ENCODE measurements at regions of chr4 and their contacts with region 1.

Region 1: GRCh38 chr4:48269861-48270522 is 354 bp upstream of the TEC start:
- DNase-seq: peak; percentile 73 to 91 (median 80)
- ATAC-seq: peak; percentile 87
- H3K4me3 ChIP-seq: peak overlapping the region; percentile 87
- H3K4me3 Mint-ChIP-seq: peak overlapping the region; percentile 98
- H3K27ac ChIP-seq: peak overlapping the region in 1 of 2 donors; percentile 55
- H3K27ac Mint-ChIP-seq: peak overlapping the region; percentile 79
- H3K4me1 ChIP-seq: peaks cover 19% of the 10 kb centered on the region
- H3K4me1 Mint-ChIP-seq: peaks cover 29% of the 10 kb centered on the region
- H3K27me3 ChIP-seq: no peaks in the 10 kb centered on the region
- H3K27me3 Mint-ChIP-seq: no peaks in the 10 kb centered on the region
- CTCF ChIP-seq: peak; percentile 46

Region 2: GRCh38 chr4:48127682-48128394 is 142.2 kb before region 1 on chr4:
- CTCF ChIA-PET with region 1: interaction called, 4 read pairs
- POLR2A ChIA-PET with region 1: no interaction called
- intact Hi-C with region 1: loop called in 1 of 2 experiments (anchors 10 kb)
- DNase-seq: peak; percentile 46 to 83 (median 66)
- ATAC-seq: peak; percentile 78
- H3K4me3 ChIP-seq: peak overlapping the region; percentile 33
- H3K4me3 Mint-ChIP-seq: peak overlapping the region; percentile 86
- H3K27ac ChIP-seq: peak overlapping the region; percentile 70 to 80
- H3K27ac Mint-ChIP-seq: peak overlapping the region; percentile 88
- H3K4me1 ChIP-seq: peaks cover 78% of the 10 kb centered on the region
- H3K4me1 Mint-ChIP-seq: peaks cover 87% of the 10 kb centered on the region
- H3K27me3 ChIP-seq: no peaks in the 10 kb centered on the region
- H3K27me3 Mint-ChIP-seq: no peaks in the 10 kb centered on the region
- CTCF ChIP-seq: peak; percentile 61

Region 3: DNA sequence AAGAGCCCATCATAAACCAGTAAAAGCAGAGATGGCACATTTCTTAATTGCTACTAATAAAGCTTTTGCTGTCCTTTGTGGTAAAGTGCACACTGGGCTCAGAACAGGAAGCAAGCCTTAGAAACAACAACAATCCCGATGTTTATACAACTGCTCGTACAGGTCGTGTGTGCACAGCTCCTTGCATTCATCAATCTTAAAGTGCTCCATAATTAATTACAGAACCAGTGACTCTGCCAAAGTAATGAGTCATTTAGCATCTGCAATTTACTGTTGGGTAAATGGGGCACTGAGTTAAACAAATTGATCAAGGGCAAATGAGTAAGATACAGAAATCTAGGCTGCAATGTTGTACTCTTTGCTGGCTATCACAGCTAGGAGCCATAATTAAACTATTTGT is 74.6 kb before region 1 on chr4:
- CTCF ChIA-PET with region 1: no interaction called
- POLR2A ChIA-PET with region 1: no interaction called
- intact Hi-C with region 1: no loop called
- DNase-seq: no peak
- ATAC-seq: no peak
- H3K4me3 ChIP-seq: no peak overlapping the region
- H3K4me3 Mint-ChIP-seq: no peak overlapping the region
- H3K27ac ChIP-seq: no peak overlapping the region
- H3K27ac Mint-ChIP-seq: no peak overlapping the region
- H3K4me1 ChIP-seq: peaks cover 3% of the 10 kb centered on the region
- H3K4me1 Mint-ChIP-seq: peaks cover 13% of the 10 kb centered on the region
- H3K27me3 ChIP-seq: no peaks in the 10 kb centered on the region
- H3K27me3 Mint-ChIP-seq: no peaks in the 10 kb centered on the region
- CTCF ChIP-seq: no peak

Region 4: GRCh38 chr4:48340965-48341775 is 71.2 kb after region 1 on chr4 and contains the start of gene SLAIN2:
- CTCF ChIA-PET with region 1: interaction called, 3 read pairs
- POLR2A ChIA-PET with region 1: interaction called, 5 read pairs
- intact Hi-C with region 1: loop called (anchors 1 to 2 kb)
- DNase-seq: peak; percentile 92 to 100 (median 98)
- ATAC-seq: peak; percentile 81
- H3K4me3 ChIP-seq: peak within 1 kb of the TSS; percentile 82
- H3K4me3 Mint-ChIP-seq: peak within 1 kb of the TSS; percentile 100
- H3K27ac ChIP-seq: peak within 1 kb of the TSS; percentile 91 to 95
- H3K27ac Mint-ChIP-seq: peak within 1 kb of the TSS; percentile 98
- H3K4me1 ChIP-seq: peaks cover 18% of the 10 kb centered on the region
- H3K4me1 Mint-ChIP-seq: peaks cover 54% of the 10 kb centered on the region
- H3K27me3 ChIP-seq: no peaks in the 10 kb centered on the region
- H3K27me3 Mint-ChIP-seq: no peaks in the 10 kb centered on the region
- CTCF ChIP-seq: peak; percentile 36
- total RNA-seq, gene SLAIN2: 46.3 to 47.0 TPM

Measured in CD4-positive, alpha-beta T cell (primary cell).